Mammary epithelial cell (primary cell): ENCODE measurements at regions of chr13 and their contacts with region 1.

Region 1: DNA sequence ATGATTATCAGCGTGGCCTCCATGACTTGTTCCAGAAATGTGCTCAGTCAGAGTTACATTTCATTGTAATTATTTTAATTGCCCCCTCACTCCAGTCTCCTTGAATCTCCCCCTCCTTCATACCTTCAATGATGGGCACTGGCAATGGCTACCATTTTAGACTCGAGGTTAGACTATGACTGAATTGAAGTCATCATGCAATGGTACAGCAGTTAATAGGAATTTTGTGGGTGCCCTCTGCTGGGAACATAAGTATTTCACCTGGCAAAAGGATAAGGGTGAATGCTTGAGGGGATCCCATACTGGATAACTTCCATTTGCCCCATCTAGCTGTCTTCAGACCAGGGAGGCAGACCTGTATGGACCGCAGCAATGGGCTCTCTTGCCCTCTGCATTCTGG is 32.2 kb upstream of the USP12 start:
- DNase-seq: peak; percentile 15
- H3K4me3 ChIP-seq: no peak overlapping the region
- H3K27ac ChIP-seq: no peak overlapping the region
- H3K4me1 ChIP-seq: no peaks in the 10 kb centered on the region
- H3K27me3 ChIP-seq: no peaks in the 10 kb centered on the region
- CTCF ChIP-seq: peak; percentile 19 to 52

Region 2: DNA sequence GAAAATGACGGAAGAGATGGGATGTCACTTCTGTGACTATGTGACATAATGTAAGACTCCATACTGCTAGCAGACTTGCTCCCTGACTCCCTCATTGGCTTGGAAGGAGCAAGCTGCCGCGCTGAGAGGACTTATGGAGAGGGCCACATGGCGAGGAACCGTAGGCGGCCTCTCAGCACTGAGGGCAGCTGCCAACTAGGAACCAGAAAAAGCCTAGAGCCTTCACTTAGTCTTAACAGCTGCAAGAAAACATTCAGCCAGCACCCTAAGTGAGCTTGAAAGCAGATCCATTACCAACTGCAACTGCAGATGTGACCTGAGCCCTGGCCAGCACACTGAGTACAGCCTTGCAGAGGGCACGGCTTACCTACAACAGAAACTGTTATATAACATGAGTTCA is 66.1 kb before region 1 on chr13:
- CTCF ChIA-PET with region 1: no interaction called
- dilution Hi-C with region 1: no loop called
- in situ Hi-C with region 1: no loop called
- intact Hi-C with region 1: loop called (anchors 5 kb)
- DNase-seq: no peak
- H3K4me3 ChIP-seq: no peak overlapping the region
- H3K27ac ChIP-seq: no peak overlapping the region
- H3K4me1 ChIP-seq: peaks cover 12% of the 10 kb centered on the region
- H3K27me3 ChIP-seq: no peaks in the 10 kb centered on the region
- CTCF ChIP-seq: no peak

Region 3: DNA sequence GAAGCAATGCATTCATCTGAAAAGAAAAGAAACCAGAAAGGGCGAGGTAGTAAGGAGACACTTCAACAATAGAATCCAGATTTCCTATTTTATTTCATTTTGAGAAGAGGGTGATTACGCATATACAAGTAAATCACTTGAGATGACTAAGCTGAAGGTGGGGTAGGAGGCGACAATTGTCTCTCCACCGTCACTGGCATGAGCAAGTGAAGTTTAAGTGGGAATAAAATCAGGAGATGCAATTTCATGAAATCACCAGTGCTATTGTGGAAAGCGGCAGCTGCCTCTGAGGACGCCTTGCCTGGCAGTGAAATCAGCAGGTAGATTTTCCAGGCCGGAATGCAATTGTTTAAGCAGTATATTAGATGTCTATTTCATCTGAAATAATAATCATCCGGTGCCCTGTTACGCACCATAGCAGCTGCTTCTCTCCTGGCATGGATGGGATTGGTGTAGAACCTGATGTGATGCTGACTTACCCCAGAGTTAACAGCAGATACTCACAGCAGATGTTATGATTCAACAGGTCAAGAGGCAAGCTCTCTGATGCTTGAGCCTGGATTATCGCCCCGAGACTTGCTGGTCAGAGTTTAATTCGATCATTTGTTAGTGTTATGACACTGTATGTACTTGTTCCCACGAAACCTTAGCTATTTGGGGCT is 131.1 kb after region 1 on chr13:
- CTCF ChIA-PET with region 1: no interaction called
- dilution Hi-C with region 1: no loop called
- in situ Hi-C with region 1: no loop called
- intact Hi-C with region 1: no loop called
- DNase-seq: no peak
- H3K4me3 ChIP-seq: no peak overlapping the region
- H3K27ac ChIP-seq: no peak overlapping the region
- H3K4me1 ChIP-seq: no peaks in the 10 kb centered on the region
- H3K27me3 ChIP-seq: no peaks in the 10 kb centered on the region
- CTCF ChIP-seq: no peak